Panc1 (cell line): ENCODE measurements at regions of chr6 and their contacts with region 1.

Region 1: DNA sequence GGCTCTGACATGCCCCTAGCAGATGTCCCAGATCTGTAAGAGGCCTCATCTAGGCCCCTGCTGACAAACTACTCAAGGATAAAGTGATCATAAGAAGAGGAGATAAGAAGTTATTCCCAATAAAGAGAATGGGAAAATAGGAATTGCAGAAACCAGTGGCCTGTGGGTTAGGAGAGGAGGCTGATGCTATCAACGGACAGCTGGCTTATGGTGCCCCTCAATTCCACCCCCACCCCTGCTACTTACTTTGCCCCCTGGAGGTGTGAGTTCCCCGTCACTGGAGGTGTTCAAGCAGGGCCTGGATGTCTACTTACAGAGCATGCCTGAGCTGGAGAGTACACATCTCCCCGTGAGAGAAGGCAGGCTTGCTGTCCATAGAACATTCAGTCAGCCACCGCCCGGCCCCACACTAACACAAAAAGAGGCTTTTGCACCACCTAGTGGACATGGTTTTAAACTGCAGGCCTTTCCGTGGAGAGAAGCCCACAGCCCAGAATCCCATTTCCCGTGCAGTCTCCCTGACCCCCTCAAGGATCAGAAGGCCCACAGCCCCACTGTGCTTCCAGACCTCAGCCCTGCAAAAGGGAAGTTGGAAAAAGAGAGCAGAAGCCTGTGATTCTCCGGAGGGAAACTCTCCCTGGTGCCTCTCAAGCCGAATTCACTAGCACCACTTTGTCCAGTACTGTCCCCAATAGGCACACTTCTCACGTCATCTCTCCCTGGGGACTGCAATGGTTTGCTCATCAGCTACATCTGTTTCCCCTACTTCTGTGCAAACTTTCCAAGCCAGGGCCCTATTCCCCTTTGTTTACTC is 23.8 kb upstream of the BNIP5 start:
- DNase-seq: peak; percentile 27
- ATAC-seq: peak; percentile 94
- H3K4me3 ChIP-seq: no peak overlapping the region; a peak in 1 of 4 replicates
- H3K27ac ChIP-seq: no peak overlapping the region
- H3K4me1 ChIP-seq: 0 out of 2 replicates have a peak, but pooled peaks cover 4% of the 10 kb centered on the region
- H3K27me3 ChIP-seq: no peaks in the 10 kb centered on the region
- CTCF ChIP-seq: peak; percentile 88

Region 2: DNA sequence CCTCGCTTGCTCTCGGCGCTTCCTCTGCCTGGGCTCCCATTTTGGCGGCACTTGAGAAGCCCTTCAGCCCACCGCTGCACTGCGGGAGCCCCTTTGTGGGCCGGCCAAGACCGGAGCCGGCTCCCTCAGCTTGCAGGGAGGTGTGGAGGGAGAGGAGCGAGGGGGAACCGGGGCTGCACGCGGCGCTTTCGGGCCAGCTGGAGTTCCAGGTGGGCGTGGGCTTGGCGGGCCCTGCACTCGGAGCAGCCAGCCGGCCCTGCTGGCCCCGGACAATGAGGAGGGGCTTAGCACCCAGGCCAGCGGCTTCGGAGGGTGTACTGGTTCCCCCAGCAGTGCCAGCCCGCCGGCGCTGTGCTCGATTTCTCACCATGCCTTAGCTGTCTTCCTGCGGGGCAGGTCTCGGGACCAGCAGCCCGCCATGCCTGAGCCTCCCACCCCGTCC is 429.3 kb before region 1 on chr6:
- CTCF ChIA-PET with region 1: no interaction called
- POLR2A ChIA-PET with region 1: no interaction called
- in situ Hi-C with region 1: no loop called
- intact Hi-C with region 1: no loop called
- DNase-seq: no peak
- ATAC-seq: no peak
- H3K4me3 ChIP-seq: no peak overlapping the region
- H3K27ac ChIP-seq: no peak overlapping the region
- H3K4me1 ChIP-seq: no peaks in the 10 kb centered on the region
- H3K27me3 ChIP-seq: no peaks in the 10 kb centered on the region
- CTCF ChIP-seq: no peak

Region 3: GRCh38 chr6:36027501-36028087 is 332.9 kb before region 1 on chr6 and contains the start of gene MAPK14:
- CTCF ChIA-PET with region 1: no interaction called
- POLR2A ChIA-PET with region 1: no interaction called
- in situ Hi-C with region 1: no loop called
- intact Hi-C with region 1: loop called (anchors 5 kb)
- DNase-seq: peak; percentile 98
- ATAC-seq: peak; percentile 95
- H3K4me3 ChIP-seq: peak within 1 kb of the TSS; percentile 88 to 91
- H3K27ac ChIP-seq: peak within 1 kb of the TSS; percentile 91
- H3K4me1 ChIP-seq: peaks cover 15% of the 10 kb centered on the region
- H3K27me3 ChIP-seq: no peaks in the 10 kb centered on the region
- CTCF ChIP-seq: peak; percentile 96
- total RNA-seq, gene MAPK14: 42.3 TPM

Region 4: GRCh38 chr6:36123257-36124139 is 236.9 kb before region 1 on chr6:
- CTCF ChIA-PET with region 1: interaction called, 4 read pairs
- POLR2A ChIA-PET with region 1: no interaction called
- in situ Hi-C with region 1: no loop called
- intact Hi-C with region 1: loop called (anchors 5 kb)
- DNase-seq: peak; percentile 36
- ATAC-seq: peak; percentile 90
- H3K4me3 ChIP-seq: no peak overlapping the region
- H3K27ac ChIP-seq: no peak overlapping the region
- H3K4me1 ChIP-seq: peaks cover 8% of the 10 kb centered on the region
- H3K27me3 ChIP-seq: no peaks in the 10 kb centered on the region
- CTCF ChIP-seq: peak; percentile 83

Region 5: DNA sequence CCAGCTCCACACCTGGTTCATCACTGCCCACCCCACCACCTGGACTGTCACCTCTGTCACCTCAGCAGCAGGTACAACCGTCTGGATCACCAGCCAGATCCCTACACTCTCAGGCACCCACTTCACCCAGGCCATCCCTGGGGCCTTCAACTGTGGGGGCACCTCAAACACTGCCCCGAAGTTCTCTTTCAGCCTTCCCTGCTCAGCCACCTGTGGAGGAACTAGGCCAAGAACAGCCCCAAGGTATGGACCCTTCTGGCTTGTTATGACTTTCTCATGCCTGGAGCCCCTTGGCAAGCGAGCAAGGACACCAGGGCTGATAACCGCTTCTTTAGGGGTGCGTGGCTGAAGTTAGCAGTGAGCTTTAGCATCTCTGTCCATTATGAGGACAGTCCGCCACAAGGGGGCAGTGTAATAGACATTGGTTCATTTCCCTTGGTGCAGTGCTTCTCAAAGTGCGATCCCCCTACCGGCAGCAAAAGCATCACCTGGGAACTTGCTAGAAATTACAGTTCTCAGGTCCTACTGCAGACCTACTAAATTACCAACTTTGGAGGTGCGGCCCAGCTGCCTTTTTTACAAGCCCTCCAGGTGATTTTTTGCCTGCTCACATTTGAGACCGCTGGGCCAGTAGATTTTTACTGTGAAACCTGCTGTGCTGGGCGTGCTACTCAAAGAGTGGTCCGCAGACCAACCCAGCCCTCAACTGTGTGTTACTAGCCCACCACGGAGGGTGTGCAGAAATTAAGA is 58.0 kb before region 1 on chr6:
- CTCF ChIA-PET with region 1: interaction called, 6 read pairs
- POLR2A ChIA-PET with region 1: no interaction called
- in situ Hi-C with region 1: no loop called
- intact Hi-C with region 1: loop called (anchors 1 kb)
- DNase-seq: peak; percentile 80
- ATAC-seq: peak; percentile 99
- H3K4me3 ChIP-seq: no peak overlapping the region
- H3K27ac ChIP-seq: no peak overlapping the region
- H3K4me1 ChIP-seq: no peaks in the 10 kb centered on the region
- H3K27me3 ChIP-seq: no peaks in the 10 kb centered on the region
- CTCF ChIP-seq: peak; percentile 96

Region 6: GRCh38 chr6:37551471-37552266 is 1191.2 kb after region 1 on chr6:
- CTCF ChIA-PET with region 1: interaction called, 17 read pairs
- POLR2A ChIA-PET with region 1: no interaction called
- in situ Hi-C with region 1: no loop called
- intact Hi-C with region 1: no loop called
- DNase-seq: no peak
- ATAC-seq: no peak
- H3K4me3 ChIP-seq: no peak overlapping the region
- H3K27ac ChIP-seq: peak overlapping the region; percentile 90
- H3K4me1 ChIP-seq: peaks cover 72% of the 10 kb centered on the region
- H3K27me3 ChIP-seq: no peaks in the 10 kb centered on the region
- CTCF ChIP-seq: no peak